HepG2 (cell line): ENCODE measurements at regions of chr21 and their contacts with region 1.

Region 1: GRCh38 chr21:17352937-17353655 is 159.7 kb upstream of the CXADR start:
- DNase-seq: no peak
- ATAC-seq: no peak
- H3K4me3 ChIP-seq: no peak overlapping the region
- H3K27ac ChIP-seq: no peak overlapping the region
- H3K4me1 ChIP-seq: peaks cover 7% of the 10 kb centered on the region
- H3K27me3 ChIP-seq: no peaks in the 10 kb centered on the region
- CTCF ChIP-seq: no peak
- EP300 ChIP-seq: no peak
- POLR2A ChIP-seq: no peak
- RAD21 ChIP-seq: no peak

Region 2: DNA sequence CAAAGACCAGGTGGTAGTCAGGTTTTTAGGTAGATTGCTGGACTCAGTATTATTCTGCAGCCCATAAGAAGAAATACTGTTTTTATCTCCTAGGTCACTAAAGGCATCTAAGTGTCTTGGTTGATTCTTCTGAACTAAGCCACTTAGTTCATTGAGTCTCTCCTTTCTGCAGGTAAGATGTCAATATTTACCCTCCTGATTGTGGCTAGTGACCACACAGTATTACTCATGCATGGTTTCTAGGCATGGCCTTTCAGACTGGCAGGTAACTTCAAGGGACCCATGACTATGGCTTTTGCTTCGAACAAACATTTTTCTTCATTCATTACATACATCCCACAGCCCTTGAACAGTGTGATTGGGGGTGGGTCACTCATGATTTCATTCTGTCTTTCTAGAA is 142.6 kb before region 1 on chr21:
- CTCF ChIA-PET with region 1: no interaction called
- POLR2A ChIA-PET with region 1: no interaction called
- in situ Hi-C with region 1: no loop called
- intact Hi-C with region 1: loop called (anchors 10 kb)
- DNase-seq: no peak
- ATAC-seq: no peak
- H3K4me3 ChIP-seq: no peak overlapping the region
- H3K27ac ChIP-seq: no peak overlapping the region
- H3K4me1 ChIP-seq: no peaks in the 10 kb centered on the region
- H3K27me3 ChIP-seq: no peaks in the 10 kb centered on the region
- CTCF ChIP-seq: no peak
- EP300 ChIP-seq: no peak
- POLR2A ChIP-seq: no peak
- RAD21 ChIP-seq: no peak

Region 3: GRCh38 chr21:17402937-17403336 is 49.8 kb after region 1 on chr21:
- CTCF ChIA-PET with region 1: no interaction called
- POLR2A ChIA-PET with region 1: no interaction called
- in situ Hi-C with region 1: no loop called
- intact Hi-C with region 1: no loop called
- DNase-seq: no peak
- ATAC-seq: no peak
- H3K4me3 ChIP-seq: no peak overlapping the region
- H3K27ac ChIP-seq: no peak overlapping the region
- H3K4me1 ChIP-seq: no peaks in the 10 kb centered on the region
- H3K27me3 ChIP-seq: no peaks in the 10 kb centered on the region; a peak in 1 of 5 replicates
- CTCF ChIP-seq: no peak
- EP300 ChIP-seq: no peak
- POLR2A ChIP-seq: no peak
- RAD21 ChIP-seq: no peak